GM12878 (cell line): ENCODE measurements at regions of chr11 and their contacts with region 1.

Region 1: DNA sequence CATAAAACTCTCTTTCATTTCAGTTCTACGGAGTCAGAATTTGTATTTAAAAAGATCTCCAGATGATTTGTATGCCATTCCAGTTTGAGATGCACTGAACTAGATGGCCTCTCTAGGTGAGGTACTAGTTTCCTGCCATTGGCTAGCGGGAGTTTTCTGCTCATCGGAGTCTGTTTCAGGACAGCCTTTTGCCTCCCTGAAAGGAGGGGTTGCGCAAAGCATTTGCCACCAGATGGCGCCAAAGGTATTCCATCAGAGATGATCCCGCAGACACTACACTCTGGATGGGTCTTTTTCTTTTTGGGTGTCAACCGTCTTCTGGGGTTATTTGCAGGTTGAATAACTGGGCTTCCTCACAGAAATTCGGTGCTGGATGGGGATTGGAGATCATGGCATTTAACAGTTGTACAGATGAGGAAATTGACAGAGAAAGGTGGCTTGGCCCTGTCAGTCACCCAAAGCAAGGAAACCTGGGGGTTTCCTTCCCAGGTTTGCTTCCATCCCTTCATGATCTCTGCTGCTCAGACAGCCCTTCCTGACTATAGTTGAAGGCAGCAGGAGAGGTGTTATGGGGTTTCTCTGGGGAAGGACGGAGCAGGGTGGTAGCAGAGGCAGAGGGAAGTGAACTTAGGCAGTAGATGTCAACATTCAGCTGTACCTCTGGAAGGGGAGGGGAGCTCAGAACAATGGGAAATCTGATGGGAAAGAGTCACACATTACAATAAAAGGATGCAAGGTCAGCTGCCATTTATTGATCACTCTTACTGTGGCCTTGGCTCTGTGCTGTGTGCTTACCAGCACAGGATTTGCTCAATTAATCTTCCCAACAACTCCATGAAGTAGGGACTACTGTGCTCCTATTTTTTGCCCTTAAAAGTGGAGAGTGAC is 81.6 kb downstream of the CCDC81 start:
- DNase-seq: peak; percentile 25
- ATAC-seq: peak; percentile 97
- H3K4me3 ChIP-seq: no peak overlapping the region
- H3K27ac ChIP-seq: no peak overlapping the region
- H3K4me1 ChIP-seq: no peaks in the 10 kb centered on the region
- H3K27me3 ChIP-seq: no peaks in the 10 kb centered on the region
- CTCF ChIP-seq: peak; percentile 85 to 88 (median 87)
- EP300 ChIP-seq: no peak
- POLR2A ChIP-seq: no peak
- RAD21 ChIP-seq: peak; percentile 96

Region 2: DNA sequence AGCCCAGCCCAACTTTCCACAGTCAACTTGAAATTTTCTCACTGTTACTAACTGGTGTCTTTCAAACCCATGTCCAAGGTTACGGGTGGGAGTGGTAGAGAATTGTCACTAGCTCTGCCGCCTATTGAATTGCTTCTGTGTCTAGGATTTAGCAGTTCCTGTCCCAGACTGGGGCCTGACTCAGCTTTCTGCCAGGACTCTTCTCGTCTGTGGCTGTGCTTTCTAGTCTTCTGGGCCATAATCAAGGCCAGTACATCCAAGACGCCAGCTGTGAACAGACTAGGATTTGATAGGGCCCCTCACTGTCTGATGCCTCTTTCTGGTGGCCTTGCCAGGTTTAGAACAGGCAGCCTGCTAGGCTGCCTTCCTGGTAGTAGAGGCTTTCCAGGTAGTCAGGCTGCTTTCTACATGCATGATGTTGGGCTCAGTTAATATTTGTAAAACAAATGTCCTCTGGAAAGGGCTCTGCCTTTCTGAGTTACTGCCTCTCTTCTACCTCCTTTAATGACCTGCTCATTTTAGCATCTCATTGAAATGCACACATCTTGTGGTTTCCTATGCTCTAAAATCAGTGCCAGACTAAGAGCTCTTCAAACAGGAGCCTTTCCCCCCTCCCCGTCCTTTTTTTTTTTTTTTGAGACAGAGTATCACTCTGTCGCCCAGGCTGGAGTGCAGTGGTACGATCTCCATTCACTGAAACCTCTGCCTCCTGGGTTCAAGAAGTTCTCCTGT is 167.4 kb before region 1 on chr11:
- CTCF ChIA-PET with region 1: no interaction called
- POLR2A ChIA-PET with region 1: no interaction called
- RAD21 ChIA-PET with region 1: no interaction called
- SMC1A ChIA-PET with region 1: no interaction called
- in situ Hi-C with region 1: no loop called
- intact Hi-C with region 1: no loop called
- DNase-seq: no peak
- ATAC-seq: no peak
- H3K4me3 ChIP-seq: no peak overlapping the region
- H3K27ac ChIP-seq: peak overlapping the region; percentile 29; the same call in 1 of the 2 replicates
- H3K4me1 ChIP-seq: peaks cover 50% of the 10 kb centered on the region
- H3K27me3 ChIP-seq: no peaks in the 10 kb centered on the region
- CTCF ChIP-seq: no peak
- EP300 ChIP-seq: no peak
- POLR2A ChIP-seq: no peak
- RAD21 ChIP-seq: no peak

Region 3: DNA sequence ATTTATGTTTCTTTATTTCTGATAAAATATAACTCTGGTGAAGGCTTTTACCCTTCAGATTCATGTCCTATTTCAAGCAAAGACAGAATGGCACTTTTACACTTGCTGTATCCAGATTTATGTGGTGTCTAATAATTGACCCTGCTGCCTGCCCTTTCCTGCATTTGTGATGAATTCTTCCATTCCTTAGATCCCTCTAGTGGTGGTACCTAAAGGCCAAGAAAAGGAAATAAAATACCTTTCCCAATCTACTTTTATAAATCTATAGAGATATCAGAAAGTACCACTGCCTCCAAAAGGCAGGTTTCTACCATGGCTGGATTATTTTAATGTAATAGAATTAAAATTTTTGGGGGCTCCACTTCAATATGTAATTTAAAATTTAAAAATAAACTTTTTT is 47.5 kb before region 1 on chr11:
- CTCF ChIA-PET with region 1: no interaction called
- POLR2A ChIA-PET with region 1: no interaction called
- RAD21 ChIA-PET with region 1: no interaction called
- SMC1A ChIA-PET with region 1: no interaction called
- in situ Hi-C with region 1: loop called (anchors 5 kb)
- intact Hi-C with region 1: no loop called
- DNase-seq: no peak
- ATAC-seq: no peak
- H3K4me3 ChIP-seq: no peak overlapping the region
- H3K27ac ChIP-seq: no peak overlapping the region
- H3K4me1 ChIP-seq: no peaks in the 10 kb centered on the region
- H3K27me3 ChIP-seq: no peaks in the 10 kb centered on the region
- CTCF ChIP-seq: peak in 1 of 3 experiments; percentile 11; a peak in 1 of 6 replicates
- EP300 ChIP-seq: no peak
- POLR2A ChIP-seq: no peak
- RAD21 ChIP-seq: no peak

Region 4: GRCh38 chr11:86469491-86470393 is 13.4 kb after region 1 on chr11:
- CTCF ChIA-PET with region 1: interaction called, 18 read pairs
- POLR2A ChIA-PET with region 1: no interaction called
- RAD21 ChIA-PET with region 1: interaction called, 3 read pairs
- SMC1A ChIA-PET with region 1: interaction called, 16 read pairs
- in situ Hi-C with region 1: no loop called
- intact Hi-C with region 1: no loop called
- DNase-seq: no peak
- ATAC-seq: no peak
- H3K4me3 ChIP-seq: no peak overlapping the region
- H3K27ac ChIP-seq: no peak overlapping the region
- H3K4me1 ChIP-seq: no peaks in the 10 kb centered on the region
- H3K27me3 ChIP-seq: peaks cover 0 to 2% of the 10 kb centered on the region in 2 experiments; a peak in 2 of 4 replicates
- CTCF ChIP-seq: no peak
- EP300 ChIP-seq: no peak
- POLR2A ChIP-seq: no peak
- RAD21 ChIP-seq: no peak

Region 5: GRCh38 chr11:86592659-86593451 is 136.6 kb after region 1 on chr11:
- CTCF ChIA-PET with region 1: interaction called, 4 read pairs
- POLR2A ChIA-PET with region 1: no interaction called
- RAD21 ChIA-PET with region 1: interaction called, 10 read pairs
- SMC1A ChIA-PET with region 1: interaction called, 9 read pairs
- in situ Hi-C with region 1: no loop called
- intact Hi-C with region 1: no loop called
- DNase-seq: peak; percentile 96
- ATAC-seq: peak; percentile 95
- H3K4me3 ChIP-seq: no peak overlapping the region
- H3K27ac ChIP-seq: peak overlapping the region; percentile 47
- H3K4me1 ChIP-seq: peaks cover 12% of the 10 kb centered on the region
- H3K27me3 ChIP-seq: no peaks in the 10 kb centered on the region
- CTCF ChIP-seq: no peak
- EP300 ChIP-seq: peak; percentile 73 to 94
- POLR2A ChIP-seq: no peak
- RAD21 ChIP-seq: no peak

Region 6: GRCh38 chr11:86805873-86806310 is 349.6 kb after region 1 on chr11:
- CTCF ChIA-PET with region 1: interaction called, 14 read pairs
- POLR2A ChIA-PET with region 1: no interaction called
- RAD21 ChIA-PET with region 1: interaction called, 4 read pairs
- SMC1A ChIA-PET with region 1: no interaction called
- in situ Hi-C with region 1: no loop called
- intact Hi-C with region 1: no loop called
- DNase-seq: peak; percentile 13
- ATAC-seq: peak; percentile 97
- H3K4me3 ChIP-seq: no peak overlapping the region
- H3K27ac ChIP-seq: no peak overlapping the region
- H3K4me1 ChIP-seq: no peaks in the 10 kb centered on the region
- H3K27me3 ChIP-seq: peaks cover under 1 to 2% of the 10 kb centered on the region in 2 experiments; a peak in 1 of 4 replicates
- CTCF ChIP-seq: no peak
- EP300 ChIP-seq: peak in 1 of 2 experiments; percentile 38; a peak in 1 of 4 replicates
- POLR2A ChIP-seq: no peak
- RAD21 ChIP-seq: no peak

Region 7: DNA sequence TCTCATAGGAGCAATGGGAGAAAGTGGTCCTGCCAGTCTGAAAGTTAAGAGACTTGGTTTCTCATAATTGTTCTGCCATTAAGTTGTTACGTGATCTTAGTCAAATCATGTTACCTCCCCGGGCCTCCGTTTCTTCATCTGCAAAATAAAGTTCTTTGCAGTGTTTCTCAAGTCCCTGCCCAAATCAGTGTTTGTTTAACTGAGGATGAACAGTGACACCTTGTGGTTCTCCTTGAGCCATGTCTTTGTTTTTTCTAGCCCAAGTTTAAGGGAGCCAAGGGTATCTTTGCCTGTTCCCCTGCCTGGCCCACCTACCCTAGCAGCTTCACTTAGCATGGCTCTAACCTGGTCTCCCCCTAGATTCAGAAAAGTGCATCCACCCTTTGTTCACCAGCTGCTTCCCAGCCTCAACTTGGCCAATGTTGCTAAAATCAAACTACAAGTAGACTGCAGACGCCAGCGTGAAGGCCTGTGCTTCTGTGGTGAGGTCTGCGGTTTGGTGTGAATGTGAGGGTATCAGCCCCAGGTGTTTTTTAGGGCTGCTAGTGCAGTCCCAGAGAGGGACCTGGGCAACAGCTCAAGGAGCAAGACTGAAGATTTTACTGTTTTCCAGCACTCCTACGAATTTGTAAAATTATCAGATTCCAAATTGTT is 463.4 kb after region 1 on chr11:
- CTCF ChIA-PET with region 1: interaction called, 4 read pairs
- POLR2A ChIA-PET with region 1: no interaction called
- RAD21 ChIA-PET with region 1: interaction called, 3 read pairs
- SMC1A ChIA-PET with region 1: interaction called, 3 read pairs
- in situ Hi-C with region 1: no loop called
- intact Hi-C with region 1: loop called (anchors 5 kb)
- DNase-seq: no peak
- ATAC-seq: peak; percentile 82
- H3K4me3 ChIP-seq: no peak overlapping the region
- H3K27ac ChIP-seq: no peak overlapping the region
- H3K4me1 ChIP-seq: no peaks in the 10 kb centered on the region
- H3K27me3 ChIP-seq: peaks cover 2% of the 10 kb centered on the region in 2 experiments; a peak in 2 of 4 replicates
- CTCF ChIP-seq: peak; percentile 51 to 57 (median 56); a peak in 5 of 6 replicates
- EP300 ChIP-seq: no peak
- POLR2A ChIP-seq: no peak
- RAD21 ChIP-seq: peak; percentile 62